CD8-positive, alpha-beta memory T cell (primary cell): ENCODE measurements at regions of chr9 and their contacts with region 1.

Region 1: GRCh38 chr9:121322037-121322775 is 47.8 kb downstream of the STOM start:
- DNase-seq: no peak
- H3K4me3 ChIP-seq: no peak overlapping the region
- H3K4me3 Mint-ChIP-seq: peak overlapping the region in 1 of 7 donors; percentile 13
- H3K27ac ChIP-seq: no peak overlapping the region
- H3K27ac Mint-ChIP-seq: peak overlapping the region in 2 of 8 donors; percentile 8 to 10
- H3K4me1 ChIP-seq: peaks cover 13% of the 10 kb centered on the region
- H3K4me1 Mint-ChIP-seq: peaks cover 29 to 43% (median 34%) of the 10 kb centered on the region in 3 donors
- H3K27me3 ChIP-seq: no peaks in the 10 kb centered on the region
- H3K27me3 Mint-ChIP-seq: no peaks in the 10 kb centered on the region

Region 2: DNA sequence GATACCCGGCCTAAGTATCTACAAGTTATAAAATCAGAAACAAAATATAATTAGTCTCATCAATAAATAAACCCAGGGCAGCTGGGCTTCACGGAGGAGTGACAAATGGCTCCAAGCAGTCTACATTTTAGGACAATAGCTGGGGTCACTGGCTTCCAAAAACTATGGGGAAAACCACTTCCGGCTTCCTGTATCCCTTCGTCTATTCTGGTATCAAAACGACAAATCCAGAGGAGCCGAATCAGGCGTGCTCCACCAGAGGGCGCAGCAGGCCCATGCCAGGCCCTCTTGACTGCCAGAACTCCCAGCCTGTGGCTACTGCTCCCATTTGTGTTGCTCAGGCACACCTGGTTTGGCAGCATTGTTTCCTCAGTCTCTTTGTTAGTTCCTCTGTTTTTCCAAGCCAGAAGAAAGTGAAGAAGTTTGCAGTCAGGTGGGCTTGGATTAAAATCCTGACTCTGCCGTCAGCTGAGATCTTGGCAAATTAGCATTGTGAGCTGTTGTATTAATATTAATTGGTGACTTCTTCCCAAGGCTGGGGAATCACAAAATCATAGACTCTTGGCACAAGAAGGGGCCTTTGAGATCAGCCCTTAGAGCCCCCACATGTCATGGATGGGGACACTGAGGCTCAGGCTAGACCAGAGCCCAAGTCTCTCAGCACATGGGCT is 108.9 kb before region 1 on chr9:
- CTCF ChIA-PET with region 1: interaction called, 20 read pairs
- POLR2A ChIA-PET with region 1: no interaction called
- DNase-seq: peak; percentile 42 to 73 (median 46)
- H3K4me3 ChIP-seq: no peak overlapping the region
- H3K4me3 Mint-ChIP-seq: no peak overlapping the region
- H3K27ac ChIP-seq: no peak overlapping the region
- H3K27ac Mint-ChIP-seq: peak overlapping the region in 2 of 8 donors; percentile 43 to 57
- H3K4me1 ChIP-seq: peaks cover 5% of the 10 kb centered on the region
- H3K4me1 Mint-ChIP-seq: peaks cover 4 to 6% (median 6%) of the 10 kb centered on the region in 3 donors
- H3K27me3 ChIP-seq: no peaks in the 10 kb centered on the region
- H3K27me3 Mint-ChIP-seq: peaks cover 0 to 1% of the 10 kb centered on the region in 2 donors

Region 3: DNA sequence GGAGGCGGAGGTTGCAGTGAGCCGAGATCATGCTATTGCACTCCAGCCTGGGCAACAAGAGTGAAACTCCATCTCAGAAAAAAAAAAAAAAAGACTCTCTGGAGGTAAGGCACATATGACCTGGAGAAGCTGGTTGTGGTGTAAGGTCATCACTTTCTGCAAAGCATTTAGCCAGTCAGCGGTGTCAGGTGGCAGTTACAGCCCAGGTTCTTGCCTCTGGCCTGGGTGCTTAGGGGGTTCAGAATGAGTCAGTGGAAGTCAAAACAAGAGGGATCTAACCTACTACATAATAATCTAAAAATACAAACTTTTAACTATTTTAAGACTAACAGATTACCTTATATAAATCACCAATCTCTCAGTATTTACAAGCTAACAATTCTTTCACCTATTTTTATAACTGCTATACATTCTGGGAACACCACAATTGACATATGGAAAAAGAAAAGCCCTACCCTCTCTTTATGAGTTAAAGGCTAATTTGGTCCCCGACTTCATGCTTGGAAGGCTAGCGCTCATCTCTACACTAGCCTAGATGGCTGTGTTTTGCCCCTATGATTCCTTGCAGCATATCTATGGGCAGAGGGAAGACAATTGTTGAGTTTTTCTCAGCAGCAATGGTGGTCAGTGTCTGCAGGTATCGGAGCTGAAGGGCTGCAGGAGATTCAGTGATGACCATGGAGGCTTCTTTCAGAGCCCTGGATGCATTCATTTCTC is 18.6 kb after region 1 on chr9:
- CTCF ChIA-PET with region 1: interaction called, 33 read pairs
- POLR2A ChIA-PET with region 1: no interaction called
- DNase-seq: no peak
- H3K4me3 ChIP-seq: no peak overlapping the region
- H3K4me3 Mint-ChIP-seq: no peak overlapping the region
- H3K27ac ChIP-seq: no peak overlapping the region
- H3K27ac Mint-ChIP-seq: peak overlapping the region in 7 of 8 donors; percentile 0 to 73 (median 64)
- H3K4me1 ChIP-seq: no peaks in the 10 kb centered on the region
- H3K4me1 Mint-ChIP-seq: peaks cover 32 to 52% (median 40%) of the 10 kb centered on the region in 3 donors
- H3K27me3 ChIP-seq: no peaks in the 10 kb centered on the region
- H3K27me3 Mint-ChIP-seq: no peaks in the 10 kb centered on the region

Region 4: GRCh38 chr9:121362813-121363621 is 40.8 kb after region 1 on chr9:
- CTCF ChIA-PET with region 1: interaction called, 30 read pairs
- POLR2A ChIA-PET with region 1: no interaction called
- DNase-seq: no peak
- H3K4me3 ChIP-seq: no peak overlapping the region
- H3K4me3 Mint-ChIP-seq: peak overlapping the region; percentile 5 to 60 (median 42)
- H3K27ac ChIP-seq: no peak overlapping the region
- H3K27ac Mint-ChIP-seq: peak overlapping the region in 7 of 8 donors; percentile 20 to 85 (median 52)
- H3K4me1 ChIP-seq: peaks cover 53% of the 10 kb centered on the region
- H3K4me1 Mint-ChIP-seq: peaks cover 87 to 99% (median 98%) of the 10 kb centered on the region in 3 donors
- H3K27me3 ChIP-seq: no peaks in the 10 kb centered on the region
- H3K27me3 Mint-ChIP-seq: no peaks in the 10 kb centered on the region

Region 5: DNA sequence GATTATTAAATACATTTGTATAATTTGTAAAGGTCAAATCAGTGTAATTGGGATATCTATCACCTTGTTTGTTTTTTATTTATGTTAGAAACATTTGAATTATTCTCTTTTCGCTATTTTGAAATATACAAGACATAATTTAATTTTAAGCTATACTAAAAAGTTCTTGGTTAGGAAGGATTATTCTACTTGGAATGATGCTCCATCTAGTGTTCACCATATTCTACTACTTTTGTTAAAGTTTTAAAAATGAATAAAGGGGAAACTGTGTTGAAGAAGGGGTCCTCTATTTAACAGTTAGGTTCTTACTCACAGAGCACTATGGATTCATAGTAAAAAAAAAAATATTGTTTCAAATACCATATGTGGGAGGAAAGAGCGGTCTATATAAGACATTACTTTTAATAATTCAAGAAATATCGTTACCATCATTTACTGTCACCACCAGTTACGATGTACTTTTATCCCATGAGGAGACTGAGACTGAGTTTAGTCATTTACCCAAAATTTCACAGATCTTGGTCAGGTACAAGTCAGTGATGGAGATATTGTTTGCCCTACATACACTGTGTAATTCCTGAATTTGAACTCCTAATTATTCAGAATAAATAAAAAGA is 54.1 kb after region 1 on chr9:
- CTCF ChIA-PET with region 1: interaction called, 204 read pairs
- POLR2A ChIA-PET with region 1: interaction called, 9 read pairs
- DNase-seq: peak in 1 of 5 donors; percentile 30
- H3K4me3 ChIP-seq: no peak overlapping the region
- H3K4me3 Mint-ChIP-seq: no peak overlapping the region
- H3K27ac ChIP-seq: no peak overlapping the region
- H3K27ac Mint-ChIP-seq: no peak overlapping the region
- H3K4me1 ChIP-seq: peaks cover 3% of the 10 kb centered on the region
- H3K4me1 Mint-ChIP-seq: peaks cover 20 to 29% (median 23%) of the 10 kb centered on the region in 3 donors
- H3K27me3 ChIP-seq: no peaks in the 10 kb centered on the region
- H3K27me3 Mint-ChIP-seq: no peaks in the 10 kb centered on the region

Region 6: GRCh38 chr9:121399883-121400607 is 77.8 kb after region 1 on chr9:
- CTCF ChIA-PET with region 1: interaction called, 212 read pairs
- POLR2A ChIA-PET with region 1: no interaction called
- DNase-seq: peak in 2 of 5 donors; percentile 49 to 51
- H3K4me3 ChIP-seq: no peak overlapping the region
- H3K4me3 Mint-ChIP-seq: no peak overlapping the region
- H3K27ac ChIP-seq: no peak overlapping the region
- H3K27ac Mint-ChIP-seq: no peak overlapping the region
- H3K4me1 ChIP-seq: no peaks in the 10 kb centered on the region
- H3K4me1 Mint-ChIP-seq: peaks cover 0 to 3% (median 0%) of the 10 kb centered on the region in 3 donors
- H3K27me3 ChIP-seq: no peaks in the 10 kb centered on the region
- H3K27me3 Mint-ChIP-seq: peaks cover 5 to 6% of the 10 kb centered on the region in 2 donors